HEK293 (cell line): ENCODE measurements at regions of chr6 and their contacts with region 1.

Region 1: DNA sequence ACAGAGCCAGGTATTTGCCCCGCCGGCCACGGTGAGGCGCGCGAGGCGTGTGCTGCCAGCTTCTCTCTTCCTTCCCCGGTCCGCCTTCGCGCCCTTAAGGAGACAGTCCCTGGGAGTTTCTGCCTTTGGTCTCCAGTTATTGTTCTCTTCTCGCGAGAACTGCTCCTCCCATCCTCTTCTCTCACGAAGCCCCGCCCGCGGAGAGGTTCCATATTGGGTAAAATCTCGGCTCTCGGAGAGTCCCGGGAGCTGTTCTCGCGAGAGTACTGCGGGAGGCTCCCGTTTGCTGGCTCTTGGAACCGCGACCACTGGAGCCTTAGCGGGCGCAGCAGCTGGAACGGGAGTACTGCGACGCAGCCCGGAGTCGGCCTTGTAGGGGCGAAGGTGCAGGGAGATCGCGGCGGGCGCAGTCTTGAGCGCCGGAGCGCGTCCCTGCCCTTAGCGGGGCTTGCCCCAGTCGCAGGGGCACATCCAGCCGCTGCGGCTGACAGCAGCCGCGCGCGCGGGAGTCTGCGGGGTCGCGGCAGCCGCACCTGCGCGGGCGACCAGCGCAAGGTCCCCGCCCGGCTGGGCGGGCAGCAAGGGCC is at the start of gene MAPK14:
- H3K4me3 ChIP-seq: peak within 1 kb of the TSS; percentile 78
- H3K27ac ChIP-seq: peak within 1 kb of the TSS; percentile 90
- H3K4me1 ChIP-seq: peaks cover 3% of the 10 kb centered on the region; the same call in 1 of the 2 replicates
- CTCF ChIP-seq: peak; percentile 96; the same call in 1 of the 2 replicates

Region 2: DNA sequence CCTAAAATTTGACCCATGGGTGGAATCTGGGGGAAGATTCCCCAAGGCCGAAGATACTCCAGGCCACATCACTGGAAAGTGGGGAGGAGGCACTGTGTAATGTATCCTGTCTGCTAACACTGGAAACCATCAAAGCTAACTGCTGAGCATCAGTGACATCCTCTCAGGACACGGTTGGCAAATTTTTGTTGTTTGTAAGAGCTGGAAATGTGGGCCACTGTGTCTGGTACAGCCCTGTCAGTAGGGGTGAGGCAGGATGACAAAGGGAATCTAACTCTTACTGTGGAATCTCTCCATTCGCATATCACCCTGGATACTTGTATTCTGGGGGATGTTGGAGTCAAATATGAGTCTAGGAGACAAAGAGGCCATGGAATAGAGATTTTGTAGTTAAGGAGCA is 268.2 kb before region 1 on chr6:
- CTCF ChIA-PET with region 1: no interaction called
- POLR2A ChIA-PET with region 1: no interaction called
- H3K4me3 ChIP-seq: no peak overlapping the region
- H3K27ac ChIP-seq: no peak overlapping the region
- H3K4me1 ChIP-seq: no peaks in the 10 kb centered on the region
- CTCF ChIP-seq: no peak

Region 3: DNA sequence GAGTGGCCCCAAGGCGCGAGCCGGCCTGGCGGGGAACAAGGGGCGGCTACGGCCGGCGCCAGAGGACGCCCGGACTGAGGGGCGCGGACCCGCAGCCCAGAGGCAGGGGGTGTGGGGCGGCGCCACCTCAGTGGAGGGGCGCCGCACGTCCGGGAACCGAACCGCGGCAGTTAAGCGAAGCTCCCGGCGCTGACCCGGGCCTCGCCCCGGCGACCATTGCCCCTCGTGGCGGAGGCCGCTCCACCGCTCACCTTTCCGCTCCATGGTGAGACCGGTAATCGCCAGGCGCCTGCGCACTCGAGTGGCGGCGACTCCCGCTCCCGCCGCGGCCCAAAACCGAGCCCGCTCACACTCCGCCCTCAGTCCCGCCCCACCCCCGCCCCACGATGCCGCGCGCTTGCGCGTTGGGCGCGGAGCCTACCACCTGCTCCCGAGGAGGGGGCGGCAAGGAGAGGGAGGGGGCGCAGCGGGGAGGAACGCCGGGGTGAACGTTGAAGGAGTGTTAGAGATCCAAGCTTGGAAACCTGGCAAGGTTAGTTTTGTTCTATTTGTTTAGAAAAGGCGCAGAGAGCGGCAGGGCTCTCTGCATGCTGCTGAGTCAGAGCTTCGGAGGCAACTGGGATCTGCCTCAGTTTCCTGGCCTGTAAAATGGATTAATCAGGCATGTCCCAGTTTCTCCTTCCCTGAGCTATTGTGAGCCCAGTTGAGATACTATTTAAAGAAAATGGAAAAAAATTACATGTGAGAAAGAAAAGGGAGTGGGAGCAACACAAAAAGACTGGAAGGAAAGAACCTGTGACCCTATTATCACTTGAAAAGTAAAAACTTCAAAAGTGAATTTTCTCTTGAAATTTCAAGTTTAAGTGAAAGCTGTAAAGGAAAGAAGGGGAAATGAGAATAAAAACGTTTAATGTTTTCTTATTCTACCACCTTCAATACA is 106.5 kb before region 1 on chr6 and contains the start of gene SRPK1:
- CTCF ChIA-PET with region 1: no interaction called
- POLR2A ChIA-PET with region 1: interaction called, 15 read pairs
- H3K4me3 ChIP-seq: peak within 1 kb of the TSS; percentile 67
- H3K27ac ChIP-seq: peak within 1 kb of the TSS; percentile 83
- H3K4me1 ChIP-seq: peaks cover 11% of the 10 kb centered on the region
- CTCF ChIP-seq: no peak

Region 4: GRCh38 chr6:36067374-36068011 is 39.9 kb after region 1 on chr6:
- CTCF ChIA-PET with region 1: interaction called, 36 read pairs
- POLR2A ChIA-PET with region 1: interaction called, 9 read pairs
- H3K4me3 ChIP-seq: no peak overlapping the region
- H3K27ac ChIP-seq: no peak overlapping the region
- H3K4me1 ChIP-seq: peaks cover 27% of the 10 kb centered on the region
- CTCF ChIP-seq: no peak

Region 5: GRCh38 chr6:36104836-36105235 is 77.2 kb after region 1 on chr6:
- CTCF ChIA-PET with region 1: interaction called, 21 read pairs
- POLR2A ChIA-PET with region 1: no interaction called
- H3K4me3 ChIP-seq: no peak overlapping the region
- H3K27ac ChIP-seq: no peak overlapping the region
- H3K4me1 ChIP-seq: no peaks in the 10 kb centered on the region
- CTCF ChIP-seq: no peak

Region 6: GRCh38 chr6:36196113-36196879 is 168.7 kb after region 1 on chr6 and contains the start of gene BRPF3:
- CTCF ChIA-PET with region 1: interaction called, 14 read pairs
- POLR2A ChIA-PET with region 1: interaction called, 5 read pairs
- H3K4me3 ChIP-seq: peak within 1 kb of the TSS; percentile 80
- H3K27ac ChIP-seq: peak within 1 kb of the TSS; percentile 88
- H3K4me1 ChIP-seq: peaks cover 11% of the 10 kb centered on the region
- CTCF ChIP-seq: peak; percentile 21; the same call in 1 of the 2 replicates